PC-9 (cell line): ENCODE measurements at regions of chr2 and their contacts with region 1.

Region 1: DNA sequence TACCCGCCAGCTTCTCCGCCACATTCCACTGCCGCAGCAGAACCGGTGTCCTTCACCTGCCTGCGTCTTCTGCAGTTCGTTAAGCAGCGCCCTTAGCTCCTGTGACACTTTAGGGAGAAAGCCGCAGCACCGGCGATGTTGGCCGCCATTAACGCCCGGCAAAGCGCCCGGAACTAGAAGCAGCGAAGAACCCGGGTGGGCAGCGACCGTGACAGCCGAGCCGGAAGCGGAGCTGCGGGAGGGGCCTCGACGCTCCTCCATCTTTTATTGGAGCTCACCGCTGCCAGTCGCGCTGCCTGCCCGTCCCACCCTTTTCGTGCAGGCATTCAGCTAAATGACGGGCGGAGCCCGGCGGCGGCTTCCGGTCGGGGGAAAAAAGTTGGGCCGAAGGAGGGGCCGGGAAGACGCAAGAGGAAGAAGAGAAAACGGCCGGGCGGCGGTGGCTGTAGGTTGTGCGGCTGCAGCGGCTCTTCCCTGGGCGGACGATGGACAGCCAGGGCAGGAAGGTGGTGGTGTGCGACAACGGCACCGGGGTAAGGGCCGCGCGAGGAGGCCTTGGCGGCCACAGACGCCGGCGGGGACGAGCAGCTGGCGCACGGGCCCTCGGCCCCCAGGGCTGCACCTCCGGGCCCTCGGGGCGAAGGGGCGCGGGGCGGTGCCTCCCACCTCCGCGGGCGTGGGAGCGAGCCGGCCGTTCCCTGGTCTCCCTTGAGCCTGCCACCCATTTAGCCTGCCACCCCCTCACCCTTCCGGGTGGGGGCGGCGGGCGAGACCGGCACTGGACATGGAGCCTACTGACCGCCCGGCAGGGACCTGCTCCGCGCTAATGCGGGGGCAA is at the start of gene ACTR2:
- DNase-seq: peak; percentile 93 to 97
- H3K4me3 ChIP-seq: peak within 1 kb of the TSS; percentile 80
- H3K27ac ChIP-seq: peak within 1 kb of the TSS; percentile 88
- H3K4me1 ChIP-seq: peaks cover 49% of the 10 kb centered on the region
- H3K27me3 ChIP-seq: no peaks in the 10 kb centered on the region
- CTCF ChIP-seq: no peak
- total RNA-seq, gene ACTR2: 170 and 246 TPM in 2 replicates

Region 2: GRCh38 chr2:65056215-65057053 is 171.2 kb before region 1 on chr2 and contains the start of gene CEP68:
- CTCF ChIA-PET with region 1: interaction called, 5 read pairs
- POLR2A ChIA-PET with region 1: no interaction called
- intact Hi-C with region 1: loop called (anchors 5 kb)
- DNase-seq: peak; percentile 95 to 97
- H3K4me3 ChIP-seq: peak within 1 kb of the TSS; percentile 86
- H3K27ac ChIP-seq: no peak within 1 kb of the TSS
- H3K4me1 ChIP-seq: peaks cover 14% of the 10 kb centered on the region
- H3K27me3 ChIP-seq: no peaks in the 10 kb centered on the region
- CTCF ChIP-seq: no peak
- total RNA-seq, gene CEP68: 10.8 and 11.5 TPM in 2 replicates

Region 3: GRCh38 chr2:65083187-65083586 is 144.5 kb before region 1 on chr2:
- CTCF ChIA-PET with region 1: no interaction called
- POLR2A ChIA-PET with region 1: no interaction called
- intact Hi-C with region 1: no loop called
- DNase-seq: no peak
- H3K4me3 ChIP-seq: no peak overlapping the region
- H3K27ac ChIP-seq: no peak overlapping the region
- H3K4me1 ChIP-seq: no peaks in the 10 kb centered on the region
- H3K27me3 ChIP-seq: no peaks in the 10 kb centered on the region
- CTCF ChIP-seq: no peak

Region 4: DNA sequence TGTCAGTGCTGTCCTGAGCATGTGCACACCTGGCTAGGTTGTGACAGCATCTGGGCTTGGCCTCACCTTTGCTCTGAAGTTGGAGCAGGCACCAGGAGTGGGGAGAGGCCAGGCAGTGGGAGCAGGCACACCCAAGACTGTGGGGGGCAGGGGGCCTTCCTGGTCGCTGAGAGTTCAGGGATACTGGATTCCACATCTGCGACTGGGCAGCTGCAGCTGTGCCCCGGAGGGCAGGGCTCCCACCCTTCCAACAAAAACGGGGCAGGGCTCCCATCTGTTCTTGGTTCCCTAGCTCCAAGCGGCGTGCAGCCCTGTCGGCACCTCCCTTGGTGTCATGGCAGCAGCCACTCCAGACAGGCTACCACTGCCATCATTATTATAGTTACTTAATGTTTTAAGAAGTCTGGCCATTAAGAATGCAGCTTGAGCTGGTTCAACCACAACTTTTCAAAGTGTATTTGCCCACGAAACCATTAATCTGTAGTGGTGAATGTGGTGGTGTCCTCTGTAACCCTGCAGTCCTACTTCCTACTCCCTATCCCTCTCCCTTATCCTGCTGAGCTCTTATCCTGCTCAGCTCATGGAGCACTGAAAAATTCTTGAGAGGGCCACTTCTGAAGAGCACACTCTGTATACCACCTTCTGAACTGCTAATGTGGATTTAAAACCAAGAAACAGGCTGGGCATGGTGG is 49.7 kb before region 1 on chr2:
- CTCF ChIA-PET with region 1: no interaction called
- POLR2A ChIA-PET with region 1: interaction called, 12 read pairs
- intact Hi-C with region 1: no loop called
- DNase-seq: no peak
- H3K4me3 ChIP-seq: no peak overlapping the region
- H3K27ac ChIP-seq: no peak overlapping the region
- H3K4me1 ChIP-seq: no peaks in the 10 kb centered on the region
- H3K27me3 ChIP-seq: no peaks in the 10 kb centered on the region
- CTCF ChIP-seq: no peak

Region 5: GRCh38 chr2:65344689-65345088 is 117.0 kb after region 1 on chr2:
- CTCF ChIA-PET with region 1: no interaction called
- POLR2A ChIA-PET with region 1: interaction called, 16 read pairs
- intact Hi-C with region 1: no loop called
- DNase-seq: no peak
- H3K4me3 ChIP-seq: no peak overlapping the region
- H3K27ac ChIP-seq: no peak overlapping the region
- H3K4me1 ChIP-seq: no peaks in the 10 kb centered on the region
- H3K27me3 ChIP-seq: no peaks in the 10 kb centered on the region
- CTCF ChIP-seq: no peak

Region 6: GRCh38 chr2:65456064-65456463 is 228.4 kb after region 1 on chr2:
- CTCF ChIA-PET with region 1: no interaction called
- POLR2A ChIA-PET with region 1: interaction called, 11 read pairs
- intact Hi-C with region 1: no loop called
- DNase-seq: peak in 1 of 2 experiments; percentile 65
- H3K4me3 ChIP-seq: no peak overlapping the region
- H3K27ac ChIP-seq: no peak overlapping the region
- H3K4me1 ChIP-seq: peaks cover 69% of the 10 kb centered on the region
- H3K27me3 ChIP-seq: no peaks in the 10 kb centered on the region
- CTCF ChIP-seq: no peak

Region 7: GRCh38 chr2:65576861-65577601 is 349.4 kb after region 1 on chr2:
- CTCF ChIA-PET with region 1: interaction called, 4 read pairs
- POLR2A ChIA-PET with region 1: interaction called, 17 read pairs
- intact Hi-C with region 1: no loop called
- DNase-seq: peak; percentile 53 to 98
- H3K4me3 ChIP-seq: peak overlapping the region; percentile 21; the same call in 1 of the 2 replicates
- H3K27ac ChIP-seq: peak overlapping the region; percentile 90
- H3K4me1 ChIP-seq: peaks cover 32% of the 10 kb centered on the region
- H3K27me3 ChIP-seq: no peaks in the 10 kb centered on the region
- CTCF ChIP-seq: no peak